Heart right ventricle (tissue), 16 donors: ENCODE measurements at regions of chr3 and their contacts with region 1.

Region 1: DNA sequence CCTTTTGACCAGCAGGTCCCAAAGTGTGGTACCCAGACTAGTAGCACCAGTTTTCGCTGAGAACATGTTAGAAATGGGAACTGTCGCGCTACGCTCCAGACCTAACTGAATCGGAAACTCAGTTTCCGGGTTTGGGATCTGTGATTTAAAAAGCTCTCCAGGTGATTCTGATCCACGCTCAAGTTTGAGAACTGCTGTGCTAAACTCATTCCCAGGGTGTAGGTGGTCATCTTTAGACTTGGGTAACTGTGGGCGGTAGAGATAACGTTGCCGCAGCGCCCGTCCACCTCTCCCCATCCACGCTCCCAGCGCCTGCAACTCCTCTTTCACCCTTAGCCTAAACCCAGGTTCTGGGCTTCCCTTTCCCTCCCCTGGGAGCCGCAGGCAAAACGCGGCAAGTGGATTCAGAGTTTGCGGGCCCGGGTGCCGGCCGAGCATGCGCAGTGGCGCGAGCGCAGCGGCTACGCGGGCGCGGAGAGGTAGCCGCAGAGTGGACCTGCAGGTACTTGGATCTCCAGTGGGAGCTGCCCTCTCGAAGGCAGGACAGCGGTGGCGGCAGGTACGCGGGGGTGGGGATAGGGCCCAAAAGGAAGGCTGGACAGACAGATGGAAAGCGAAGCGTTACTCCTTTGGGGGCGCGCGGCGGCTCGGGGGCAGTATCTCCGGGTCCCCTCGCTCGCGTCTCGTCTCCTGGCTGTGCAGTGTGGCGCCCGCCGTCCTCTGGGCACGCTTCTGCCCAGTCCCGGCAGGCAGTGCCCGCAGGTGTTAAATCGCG is at the start of gene PLS1:
- DNase-seq: peak; percentile 75 to 87
- ATAC-seq: peak; percentile 92 to 97 (median 96)
- H3K4me3 ChIP-seq: peak within 1 kb of the TSS; percentile 52 to 82 (median 74)
- H3K27ac ChIP-seq: peak within 1 kb of the TSS in 9 of 10 donors; percentile 54 to 68 (median 63)
- H3K4me1 ChIP-seq: peaks cover 0 to 17% (median 4%) of the 10 kb centered on the region in 9 donors
- H3K27me3 ChIP-seq: no peaks in the 10 kb centered on the region
- CTCF ChIP-seq: peak in 1 of 9 donors; percentile 7
- total RNA-seq, gene PLS1: 1.0 to 2.7 (median 1.8) TPM

Region 2: GRCh38 chr3:142723968-142724681 is 128.0 kb after region 1 on chr3 and contains the start of gene TRPC1:
- intact Hi-C with region 1: loop called in 2 of 10 experiments (anchors 10 kb)
- DNase-seq: peak; percentile 77 to 78
- ATAC-seq: peak; percentile 89 to 95 (median 94)
- H3K4me3 ChIP-seq: peak within 1 kb of the TSS; percentile 72 to 94 (median 82)
- H3K27ac ChIP-seq: peak within 1 kb of the TSS; percentile 82 to 99 (median 91)
- H3K4me1 ChIP-seq: peaks cover 0 to 29% (median 15%) of the 10 kb centered on the region in 9 donors
- H3K27me3 ChIP-seq: peaks cover 0 to 24% (median 0%) of the 10 kb centered on the region in 7 donors
- CTCF ChIP-seq: no peak
- total RNA-seq, gene TRPC1: 6.3 to 17.6 (median 11.8) TPM

Region 3: GRCh38 chr3:142817897-142818296 is 221.8 kb after region 1 on chr3:
- intact Hi-C with region 1: loop called in 3 of 10 experiments (anchors 10 kb)
- DNase-seq: no peak
- ATAC-seq: peak in 2 of 8 donors; percentile 61 to 62
- H3K4me3 ChIP-seq: no peak overlapping the region
- H3K27ac ChIP-seq: no peak overlapping the region
- H3K4me1 ChIP-seq: peaks cover 0 to 12% (median 0%) of the 10 kb centered on the region in 9 donors
- H3K27me3 ChIP-seq: no peaks in the 10 kb centered on the region
- CTCF ChIP-seq: no peak

Region 4: DNA sequence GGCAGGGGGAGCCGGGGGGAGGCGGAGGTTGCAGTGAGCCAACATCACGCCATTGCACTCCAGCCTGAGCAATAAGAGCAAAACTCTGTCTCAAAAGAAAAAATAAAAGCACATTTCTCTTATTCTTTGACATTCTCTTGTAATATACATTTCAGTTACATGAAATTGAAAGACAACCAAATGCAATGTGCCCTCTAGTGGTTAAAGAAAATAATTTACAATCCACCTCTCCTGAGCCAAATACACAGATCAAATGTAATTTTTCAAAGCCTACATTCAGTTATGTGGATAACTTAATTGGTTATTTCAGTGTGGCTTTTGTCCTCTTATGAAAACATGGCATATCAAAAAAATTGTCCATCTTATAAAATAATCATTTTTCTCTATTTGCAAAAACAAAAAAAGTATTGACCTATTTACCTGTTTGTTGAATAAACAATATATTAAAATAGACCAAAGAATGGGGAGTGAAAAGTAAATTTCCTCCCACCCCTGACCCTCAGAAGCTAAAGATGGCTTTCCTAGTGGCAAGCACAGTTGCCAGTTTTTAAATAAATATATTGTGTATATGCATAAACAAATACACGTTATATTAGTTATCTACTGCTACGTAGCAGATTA is 391.1 kb after region 1 on chr3:
- intact Hi-C with region 1: loop called in 2 of 10 experiments (anchors 5 to 10 kb)
- DNase-seq: no peak
- ATAC-seq: peak in 5 of 8 donors; percentile 40 to 70 (median 67)
- H3K4me3 ChIP-seq: peak overlapping the region in 3 of 10 donors; percentile 0 to 5 (median 2)
- H3K27ac ChIP-seq: peak overlapping the region in 8 of 10 donors; percentile 9 to 68 (median 60)
- H3K4me1 ChIP-seq: peaks cover 0 to 15% (median 0%) of the 10 kb centered on the region in 9 donors
- H3K27me3 ChIP-seq: no peaks in the 10 kb centered on the region
- CTCF ChIP-seq: peak; percentile 39 to 81 (median 71)

Region 5: DNA sequence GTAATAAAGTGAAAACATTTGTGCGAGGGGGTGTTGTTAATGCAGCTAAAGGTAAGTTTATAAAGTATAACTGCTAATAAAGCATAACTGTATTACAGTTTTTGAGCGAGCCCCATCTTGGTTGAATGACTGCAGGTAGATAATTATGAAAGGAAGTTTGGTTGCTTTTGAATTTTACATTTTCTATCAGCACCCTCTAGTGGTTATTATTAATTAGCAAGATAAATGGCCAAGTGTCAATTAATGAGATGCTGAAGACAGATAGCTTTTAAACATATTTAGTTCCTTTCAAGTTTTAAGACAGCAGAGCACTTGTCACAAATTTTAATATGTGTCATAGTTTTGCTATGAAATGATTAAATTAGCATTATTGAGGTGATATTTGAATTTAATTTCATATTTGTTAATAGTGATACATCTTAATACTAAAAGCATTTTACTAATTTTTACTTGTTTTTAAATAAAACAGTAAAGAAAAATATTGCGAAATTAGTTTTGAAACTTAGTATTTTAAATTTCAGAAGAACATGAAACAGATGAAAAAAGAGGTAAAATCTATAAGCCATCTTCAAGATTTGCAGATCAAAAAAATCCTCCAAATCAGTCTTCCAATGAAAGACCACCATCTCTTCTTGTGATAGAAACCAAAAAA is 420.3 kb after region 1 on chr3:
- intact Hi-C with region 1: loop called in 1 of 10 experiments (anchors 5 kb)
- DNase-seq: no peak
- ATAC-seq: no peak
- H3K4me3 ChIP-seq: no peak overlapping the region
- H3K27ac ChIP-seq: no peak overlapping the region
- H3K4me1 ChIP-seq: peaks cover 0 to 3% (median 0%) of the 10 kb centered on the region in 9 donors
- H3K27me3 ChIP-seq: no peaks in the 10 kb centered on the region
- CTCF ChIP-seq: peak; percentile 30 to 70 (median 63)